Heart left ventricle (tissue), 16 donors: ENCODE measurements at regions of chr14 and their contacts with region 1.

Region 1: GRCh38 chr14:73311708-73312030 is 74.4 kb downstream of the PAPLN start:
- DNase-seq: no peak
- ATAC-seq: no peak
- H3K4me3 ChIP-seq: no peak overlapping the region
- H3K27ac ChIP-seq: peak overlapping the region in 3 of 12 donors; percentile 6 to 60 (median 26)
- H3K4me1 ChIP-seq: peaks cover 0 to 22% (median 7%) of the 10 kb centered on the region in 12 donors
- H3K27me3 ChIP-seq: no peaks in the 10 kb centered on the region
- CTCF ChIP-seq: no peak
- POLR2A ChIP-seq: no peak

Region 2: DNA sequence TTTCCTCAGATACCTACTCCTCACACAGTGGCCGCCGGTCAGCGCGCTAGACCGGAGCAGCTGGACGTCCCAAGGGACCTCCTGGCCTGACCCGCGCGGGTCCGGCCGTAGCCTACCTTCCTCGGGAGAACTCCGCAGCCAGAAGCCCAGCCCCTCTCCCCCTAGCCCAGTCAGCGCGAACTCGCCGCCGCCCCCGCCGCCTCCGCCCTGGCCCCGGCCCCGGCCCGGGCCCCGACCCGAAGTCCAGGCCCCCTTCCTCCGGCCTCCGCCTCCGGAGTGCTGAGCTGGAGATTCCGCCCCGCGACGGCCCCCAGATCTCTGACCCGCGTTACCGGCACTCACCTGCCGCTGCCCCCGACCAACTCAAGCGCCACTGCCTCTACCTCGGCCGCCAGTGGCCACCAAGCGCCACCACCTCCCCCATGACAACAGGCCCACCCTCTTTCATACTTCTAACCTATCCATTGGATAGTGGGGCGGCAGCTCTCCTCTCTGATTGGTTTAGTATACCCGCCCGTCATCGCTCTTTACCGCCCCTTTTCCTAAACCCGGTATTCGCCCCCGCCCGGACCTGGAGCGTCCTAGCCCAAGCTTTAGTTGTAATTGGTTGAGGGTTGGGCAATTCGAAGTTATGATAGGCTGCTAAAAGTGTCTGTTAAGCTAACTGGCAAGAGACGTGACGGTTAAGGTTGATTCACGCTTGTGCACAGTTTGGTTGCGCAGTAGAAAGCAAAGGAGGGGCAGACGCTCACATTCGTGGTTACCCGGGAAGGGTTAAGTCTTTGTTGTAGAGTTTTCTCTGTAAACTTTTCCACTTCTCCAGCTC is 146.7 kb after region 1 on chr14 and contains the start of gene NUMB:
- intact Hi-C with region 1: loop called in 1 of 10 experiments (anchors 5 kb)
- DNase-seq: peak; percentile 97 to 99 (median 98)
- ATAC-seq: peak; percentile 97 to 99 (median 98)
- H3K4me3 ChIP-seq: peak within 1 kb of the TSS; percentile 80 to 99 (median 88)
- H3K27ac ChIP-seq: peak within 1 kb of the TSS; percentile 83 to 97 (median 90)
- H3K4me1 ChIP-seq: peaks cover 10 to 82% (median 61%) of the 10 kb centered on the region in 12 donors
- H3K27me3 ChIP-seq: no peaks in the 10 kb centered on the region
- CTCF ChIP-seq: peak in 4 of 12 donors; percentile 6 to 34 (median 10)
- POLR2A ChIP-seq: peak; percentile 50 to 81
- total RNA-seq, gene NUMB: 22.4 to 59.1 (median 35.0) TPM

Region 3: DNA sequence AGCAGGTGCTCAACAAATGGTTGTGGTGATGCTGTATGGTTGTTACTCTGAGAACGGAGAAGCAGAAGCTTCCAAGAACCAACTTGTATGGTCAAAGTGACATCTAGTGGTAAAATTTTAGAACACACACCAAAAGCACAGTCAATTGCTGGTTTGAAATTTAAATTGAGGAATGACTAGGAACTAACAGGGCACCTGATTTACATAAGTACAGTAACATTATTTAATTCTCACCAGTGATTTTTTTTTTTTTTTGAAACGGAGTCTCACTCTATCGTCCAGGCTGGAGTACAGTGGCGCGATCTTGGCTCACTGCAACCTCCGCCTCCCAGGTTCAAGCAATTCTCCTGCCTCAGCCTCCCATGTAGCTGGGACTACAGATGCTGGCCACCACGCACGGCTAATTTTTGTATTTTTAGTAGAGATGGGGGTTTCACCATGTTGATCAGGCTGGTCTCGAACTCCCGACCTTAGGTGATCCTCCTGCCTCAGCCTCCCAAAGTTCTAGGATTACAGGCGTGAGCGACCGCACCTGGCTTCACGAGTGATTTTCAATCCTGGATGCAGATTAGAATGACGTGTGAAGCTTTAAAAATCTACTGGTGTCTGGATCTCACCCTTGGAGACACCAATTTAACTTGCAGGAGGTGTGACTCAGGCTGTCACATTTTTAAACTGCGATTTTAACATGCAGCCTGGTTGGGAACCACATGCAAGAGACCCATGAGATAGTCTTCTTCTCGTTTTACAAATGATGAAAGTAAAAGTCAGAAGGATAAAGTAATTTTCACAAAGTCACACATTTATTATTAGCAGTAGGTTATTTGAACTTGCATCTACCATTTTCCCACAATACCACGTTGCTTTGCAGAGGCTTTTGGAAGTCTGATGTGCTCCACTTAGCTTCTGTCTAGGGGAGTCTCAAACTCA is 160.8 kb after region 1 on chr14:
- intact Hi-C with region 1: loop called in 1 of 10 experiments (anchors 5 kb)
- DNase-seq: no peak
- ATAC-seq: peak in 3 of 4 donors; percentile 79 to 88 (median 80)
- H3K4me3 ChIP-seq: no peak overlapping the region
- H3K27ac ChIP-seq: no peak overlapping the region
- H3K4me1 ChIP-seq: peaks cover 0 to 8% (median 0%) of the 10 kb centered on the region in 12 donors
- H3K27me3 ChIP-seq: no peaks in the 10 kb centered on the region
- CTCF ChIP-seq: peak; percentile 59 to 86 (median 74)
- POLR2A ChIP-seq: no peak